Activated CD8-positive, alpha-beta T cell treated with anti-CD3 and anti-CD28 coated beads, Interleukin-2, amount 10 ng/mL, durations not matched to agents 7 days and 5 days (primary cell): ENCODE measurements at regions of chr1 and their contacts with region 1.

Region 1: GRCh38 chr1:24847995-24848881 is 81.8 kb downstream of the RUNX3 start:
- DNase-seq: peak; percentile 94
- ATAC-seq: peak; percentile 98
- H3K4me3 Mint-ChIP-seq: peak overlapping the region; percentile 56
- H3K27ac Mint-ChIP-seq: peak overlapping the region; percentile 70
- H3K4me1 Mint-ChIP-seq: peaks cover 24% of the 10 kb centered on the region
- H3K27me3 Mint-ChIP-seq: peaks cover 47% of the 10 kb centered on the region

Region 2: GRCh38 chr1:24688621-24689195 is 159.5 kb before region 1 on chr1:
- CTCF ChIA-PET with region 1: interaction called, 11 read pairs
- POLR2A ChIA-PET with region 1: no interaction called
- DNase-seq: peak; percentile 67
- ATAC-seq: peak; percentile 77
- H3K4me3 Mint-ChIP-seq: no peak overlapping the region
- H3K27ac Mint-ChIP-seq: no peak overlapping the region
- H3K4me1 Mint-ChIP-seq: no peaks in the 10 kb centered on the region
- H3K27me3 Mint-ChIP-seq: no peaks in the 10 kb centered on the region

Region 3: DNA sequence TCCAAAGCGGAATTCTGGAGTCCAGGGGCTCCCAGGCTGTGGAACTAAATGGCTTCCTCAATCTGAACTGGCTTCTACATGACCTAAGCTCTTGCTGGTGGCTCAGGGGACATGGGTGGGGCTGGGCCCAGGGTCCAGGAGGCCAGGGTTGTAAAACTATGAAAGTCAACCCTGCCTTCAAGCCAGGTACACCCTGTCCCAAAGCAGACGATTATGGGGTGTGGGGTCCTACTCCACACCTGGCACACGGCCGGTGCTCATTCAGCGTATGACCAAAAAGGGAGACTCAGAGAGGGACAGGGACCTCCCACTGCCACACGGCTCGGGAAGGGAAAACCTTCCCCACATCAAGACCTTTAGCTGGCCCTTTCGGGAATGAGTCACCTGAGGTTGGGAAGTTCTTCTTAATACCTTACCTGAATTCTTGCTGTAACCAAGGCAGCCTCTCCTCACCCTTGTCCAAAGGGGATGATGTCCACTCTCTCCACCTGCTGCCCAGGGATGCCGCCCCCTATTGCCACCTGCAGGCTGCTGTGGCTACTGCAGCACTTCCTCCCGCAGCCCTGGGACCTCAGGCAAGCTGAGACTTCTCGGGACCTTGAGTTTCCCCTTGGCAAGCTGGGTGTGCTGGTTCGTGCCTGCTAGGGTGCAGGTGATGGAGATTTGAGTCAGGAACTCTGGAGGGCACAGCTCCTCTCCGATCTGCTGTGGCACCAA is 49.7 kb after region 1 on chr1:
- CTCF ChIA-PET with region 1: interaction called, 16 read pairs
- POLR2A ChIA-PET with region 1: no interaction called
- DNase-seq: peak; percentile 70
- ATAC-seq: peak; percentile 45
- H3K4me3 Mint-ChIP-seq: peak overlapping the region; percentile 43
- H3K27ac Mint-ChIP-seq: peak overlapping the region; percentile 75
- H3K4me1 Mint-ChIP-seq: peaks cover 22% of the 10 kb centered on the region
- H3K27me3 Mint-ChIP-seq: no peaks in the 10 kb centered on the region

Region 4: GRCh38 chr1:24930204-24931145 is 82.2 kb after region 1 on chr1 and contains the start of gene RUNX3:
- CTCF ChIA-PET with region 1: interaction called, 23 read pairs
- POLR2A ChIA-PET with region 1: interaction called, 3 read pairs
- DNase-seq: peak; percentile 92
- ATAC-seq: peak; percentile 79
- H3K4me3 Mint-ChIP-seq: peak within 1 kb of the TSS; percentile 95
- H3K27ac Mint-ChIP-seq: peak within 1 kb of the TSS; percentile 85
- H3K4me1 Mint-ChIP-seq: peaks cover 80% of the 10 kb centered on the region
- H3K27me3 Mint-ChIP-seq: no peaks in the 10 kb centered on the region
- total RNA-seq, gene RUNX3: 144 to 147 TPM

Region 5: GRCh38 chr1:25148673-25149300 is 300.5 kb after region 1 on chr1:
- CTCF ChIA-PET with region 1: interaction called, 15 read pairs
- POLR2A ChIA-PET with region 1: no interaction called
- DNase-seq: peak; percentile 63
- ATAC-seq: peak; percentile 63
- H3K4me3 Mint-ChIP-seq: no peak overlapping the region
- H3K27ac Mint-ChIP-seq: no peak overlapping the region
- H3K4me1 Mint-ChIP-seq: peaks cover 5% of the 10 kb centered on the region
- H3K27me3 Mint-ChIP-seq: peaks cover 47% of the 10 kb centered on the region

Region 6: GRCh38 chr1:25204797-25205480 is 356.7 kb after region 1 on chr1:
- CTCF ChIA-PET with region 1: interaction called, 79 read pairs
- POLR2A ChIA-PET with region 1: no interaction called
- DNase-seq: peak; percentile 43
- ATAC-seq: no peak
- H3K4me3 Mint-ChIP-seq: no peak overlapping the region
- H3K27ac Mint-ChIP-seq: no peak overlapping the region
- H3K4me1 Mint-ChIP-seq: no peaks in the 10 kb centered on the region
- H3K27me3 Mint-ChIP-seq: peaks cover 21% of the 10 kb centered on the region